PC-9 (cell line): ENCODE measurements at regions of chr2 and their contacts with region 1.

Region 1: GRCh38 chr2:138985881-138986280 is 205.7 kb upstream of the NXPH2 start:
- DNase-seq: no peak
- H3K4me3 ChIP-seq: no peak overlapping the region
- H3K27ac ChIP-seq: no peak overlapping the region
- H3K4me1 ChIP-seq: no peaks in the 10 kb centered on the region
- H3K27me3 ChIP-seq: no peaks in the 10 kb centered on the region
- CTCF ChIP-seq: no peak

Region 2: DNA sequence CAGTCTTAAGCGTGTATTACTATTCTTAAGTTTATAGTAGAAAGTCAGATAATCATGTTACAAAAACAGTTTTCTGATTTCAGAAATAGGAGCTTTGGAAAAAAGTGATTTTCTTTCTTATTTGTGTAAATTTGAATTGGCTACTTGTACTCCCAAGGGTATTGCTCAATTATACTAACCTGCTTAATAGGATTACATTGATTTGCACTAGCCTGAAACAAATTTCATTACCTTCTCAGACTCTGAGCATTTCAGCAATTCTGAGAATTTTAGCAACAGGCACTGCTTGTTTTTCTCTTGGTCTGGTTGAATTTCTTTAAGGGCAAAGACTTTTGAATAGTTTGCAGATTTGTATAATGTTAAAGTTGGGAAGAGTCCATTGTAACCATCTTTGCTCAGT is 118.5 kb before region 1 on chr2:
- CTCF ChIA-PET with region 1: no interaction called
- POLR2A ChIA-PET with region 1: no interaction called
- intact Hi-C with region 1: no loop called
- DNase-seq: no peak
- H3K4me3 ChIP-seq: no peak overlapping the region
- H3K27ac ChIP-seq: no peak overlapping the region
- H3K4me1 ChIP-seq: no peaks in the 10 kb centered on the region
- H3K27me3 ChIP-seq: no peaks in the 10 kb centered on the region
- CTCF ChIP-seq: no peak

Region 3: DNA sequence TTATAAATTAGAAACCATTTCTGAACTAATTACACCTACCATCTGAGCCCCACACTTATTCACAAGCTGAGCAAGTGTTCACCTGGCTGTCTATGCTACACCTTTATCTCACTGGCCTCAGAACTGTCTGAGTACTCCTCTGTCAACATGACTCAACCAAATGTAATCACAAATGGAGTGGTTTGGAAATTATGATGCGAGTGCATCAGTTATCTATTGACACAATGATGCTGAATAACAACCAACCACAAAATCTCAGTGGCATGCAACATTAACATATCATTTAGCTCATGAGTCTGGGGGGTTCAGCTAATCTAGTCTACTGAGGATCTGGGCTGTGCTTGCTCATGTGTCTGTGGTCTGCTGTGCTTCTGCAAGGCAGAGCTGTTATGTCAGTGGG is 21.5 kb before region 1 on chr2:
- CTCF ChIA-PET with region 1: no interaction called
- POLR2A ChIA-PET with region 1: interaction called, 13 read pairs
- intact Hi-C with region 1: no loop called
- DNase-seq: no peak
- H3K4me3 ChIP-seq: no peak overlapping the region
- H3K27ac ChIP-seq: no peak overlapping the region
- H3K4me1 ChIP-seq: no peaks in the 10 kb centered on the region
- H3K27me3 ChIP-seq: no peaks in the 10 kb centered on the region
- CTCF ChIP-seq: no peak